ENCODE measurements at regions of chr1 and their contacts with region 1.

Region 1: GRCh38 chr1:28329395-28330153 is 734 bp downstream of the MED18 start:
- DNase-seq: peak; percentile 50
- ATAC-seq: peak; percentile 11
- H3K4me3 Mint-ChIP-seq: peak overlapping the region; percentile 92
- H3K27ac Mint-ChIP-seq: peak overlapping the region; percentile 97
- H3K4me1 Mint-ChIP-seq: peaks cover 49% of the 10 kb centered on the region
- H3K27me3 Mint-ChIP-seq: peaks cover 2% of the 10 kb centered on the region
- CTCF ChIP-seq: no peak

Region 2: DNA sequence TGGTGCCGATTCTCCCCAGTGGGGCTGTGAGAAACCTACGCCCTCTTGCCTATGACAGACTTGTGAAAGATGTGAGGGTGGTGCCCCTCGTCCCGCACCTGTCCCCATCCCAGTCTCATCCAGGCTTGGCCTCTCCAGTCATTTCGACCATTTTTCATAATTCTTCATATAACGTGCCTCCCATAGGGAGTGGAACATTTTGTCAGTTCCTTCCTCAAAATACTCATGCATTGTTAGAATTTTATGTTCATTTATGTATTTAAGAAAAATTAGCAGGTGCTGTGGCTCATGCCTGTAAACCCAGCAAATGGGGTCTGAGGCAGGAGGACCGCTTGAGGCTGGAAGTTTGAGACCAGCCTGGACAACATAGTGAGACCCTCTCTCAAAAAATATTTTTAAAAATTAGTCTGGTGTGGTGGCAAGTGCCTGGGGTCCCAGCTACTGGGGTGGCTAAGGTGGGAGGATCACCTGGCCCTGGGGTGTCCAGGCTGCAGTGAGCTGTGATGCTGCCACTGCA is 414.4 kb before region 1 on chr1:
- CTCF ChIA-PET with region 1: no interaction called
- POLR2A ChIA-PET with region 1: no interaction called
- intact Hi-C with region 1: no loop called
- DNase-seq: no peak
- ATAC-seq: no peak
- H3K4me3 Mint-ChIP-seq: peak overlapping the region; percentile 99
- H3K27ac Mint-ChIP-seq: peak overlapping the region; percentile 97
- H3K4me1 Mint-ChIP-seq: peaks cover 14% of the 10 kb centered on the region
- H3K27me3 Mint-ChIP-seq: peaks cover 3% of the 10 kb centered on the region
- CTCF ChIP-seq: no peak

Region 3: GRCh38 chr1:28088168-28088961 is 241.2 kb before region 1 on chr1 and contains the start of gene EYA3:
- CTCF ChIA-PET with region 1: no interaction called
- POLR2A ChIA-PET with region 1: interaction called, 13 read pairs
- intact Hi-C with region 1: loop called (anchors 1 kb)
- DNase-seq: peak; percentile 100
- ATAC-seq: peak; percentile 93
- H3K4me3 Mint-ChIP-seq: peak within 1 kb of the TSS; percentile 98
- H3K27ac Mint-ChIP-seq: peak within 1 kb of the TSS; percentile 98
- H3K4me1 Mint-ChIP-seq: peaks cover 39% of the 10 kb centered on the region
- H3K27me3 Mint-ChIP-seq: no peaks in the 10 kb centered on the region
- CTCF ChIP-seq: no peak
- total RNA-seq, gene EYA3: 26.7 and 31.0 TPM in 2 replicates

Region 4: DNA sequence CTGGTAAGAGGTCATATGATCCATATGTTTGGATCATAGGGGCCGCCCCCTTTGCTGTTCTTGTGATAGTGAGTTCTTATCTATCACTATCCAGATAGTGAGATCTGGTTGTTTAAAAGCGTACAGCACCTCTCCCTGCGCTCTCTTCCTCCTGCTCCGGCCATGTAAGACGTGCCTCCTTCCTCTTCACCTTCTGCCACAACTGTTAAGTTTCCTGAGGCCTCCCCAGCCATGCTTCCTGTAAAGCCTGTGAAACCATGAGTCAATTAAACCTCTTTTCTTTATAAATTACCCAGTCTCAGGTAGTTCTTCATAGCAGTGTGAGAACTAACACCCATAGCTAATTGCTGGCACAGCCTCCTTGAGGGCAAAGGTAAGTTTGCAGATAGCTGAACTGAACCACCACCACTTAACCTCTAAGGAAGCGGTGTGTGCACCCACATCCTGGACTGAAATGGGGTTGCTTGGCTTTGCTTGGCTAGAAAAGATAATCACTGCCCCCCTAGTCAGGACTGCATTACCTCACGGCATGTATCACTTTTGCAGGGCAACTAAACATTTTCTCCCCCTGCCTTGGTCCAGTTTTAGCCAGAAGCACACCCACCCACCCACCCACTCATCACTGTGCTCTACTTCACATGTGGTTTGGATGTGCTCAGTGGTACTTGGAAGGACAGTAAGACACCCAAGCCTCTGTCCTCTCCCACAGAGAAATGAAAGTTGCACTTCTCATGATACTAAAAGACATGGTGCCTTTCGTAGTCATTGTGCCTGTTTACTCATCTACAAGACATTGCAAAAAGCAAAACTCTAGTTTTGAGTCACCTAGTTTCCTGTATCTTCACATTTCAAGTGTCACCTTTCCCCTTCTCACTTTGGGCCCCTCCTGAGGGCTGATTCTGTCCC is 130.0 kb before region 1 on chr1:
- CTCF ChIA-PET with region 1: no interaction called
- POLR2A ChIA-PET with region 1: no interaction called
- intact Hi-C with region 1: no loop called
- DNase-seq: no peak
- ATAC-seq: peak; percentile 80
- H3K4me3 Mint-ChIP-seq: no peak overlapping the region
- H3K27ac Mint-ChIP-seq: peak overlapping the region; percentile 80
- H3K4me1 Mint-ChIP-seq: peaks cover 22% of the 10 kb centered on the region
- H3K27me3 Mint-ChIP-seq: no peaks in the 10 kb centered on the region
- CTCF ChIP-seq: no peak

Region 5: GRCh38 chr1:28259307-28260167 is 70.0 kb before region 1 on chr1 and contains the start of gene SESN2:
- CTCF ChIA-PET with region 1: no interaction called
- POLR2A ChIA-PET with region 1: interaction called, 79 read pairs
- intact Hi-C with region 1: loop called (anchors 1 kb)
- DNase-seq: peak; percentile 99
- ATAC-seq: peak; percentile 98
- H3K4me3 Mint-ChIP-seq: peak within 1 kb of the TSS; percentile 82
- H3K27ac Mint-ChIP-seq: peak within 1 kb of the TSS; percentile 79
- H3K4me1 Mint-ChIP-seq: peaks cover 23% of the 10 kb centered on the region
- H3K27me3 Mint-ChIP-seq: peaks cover 6% of the 10 kb centered on the region
- CTCF ChIP-seq: no peak
- total RNA-seq, gene SESN2: 19.5 and 19.8 TPM in 2 replicates

Region 6: GRCh38 chr1:28505406-28506187 is 176.0 kb after region 1 on chr1 and contains the start of gene RCC1:
- CTCF ChIA-PET with region 1: no interaction called
- POLR2A ChIA-PET with region 1: interaction called, 87 read pairs
- intact Hi-C with region 1: loop called (anchors 2 kb)
- DNase-seq: peak; percentile 82
- ATAC-seq: peak; percentile 87
- H3K4me3 Mint-ChIP-seq: peak within 1 kb of the TSS; percentile 98
- H3K27ac Mint-ChIP-seq: peak within 1 kb of the TSS; percentile 98
- H3K4me1 Mint-ChIP-seq: peaks cover 38% of the 10 kb centered on the region
- H3K27me3 Mint-ChIP-seq: no peaks in the 10 kb centered on the region
- CTCF ChIP-seq: no peak
- total RNA-seq, gene RCC1: 45.2 and 47.5 TPM in 2 replicates

Region 7: DNA sequence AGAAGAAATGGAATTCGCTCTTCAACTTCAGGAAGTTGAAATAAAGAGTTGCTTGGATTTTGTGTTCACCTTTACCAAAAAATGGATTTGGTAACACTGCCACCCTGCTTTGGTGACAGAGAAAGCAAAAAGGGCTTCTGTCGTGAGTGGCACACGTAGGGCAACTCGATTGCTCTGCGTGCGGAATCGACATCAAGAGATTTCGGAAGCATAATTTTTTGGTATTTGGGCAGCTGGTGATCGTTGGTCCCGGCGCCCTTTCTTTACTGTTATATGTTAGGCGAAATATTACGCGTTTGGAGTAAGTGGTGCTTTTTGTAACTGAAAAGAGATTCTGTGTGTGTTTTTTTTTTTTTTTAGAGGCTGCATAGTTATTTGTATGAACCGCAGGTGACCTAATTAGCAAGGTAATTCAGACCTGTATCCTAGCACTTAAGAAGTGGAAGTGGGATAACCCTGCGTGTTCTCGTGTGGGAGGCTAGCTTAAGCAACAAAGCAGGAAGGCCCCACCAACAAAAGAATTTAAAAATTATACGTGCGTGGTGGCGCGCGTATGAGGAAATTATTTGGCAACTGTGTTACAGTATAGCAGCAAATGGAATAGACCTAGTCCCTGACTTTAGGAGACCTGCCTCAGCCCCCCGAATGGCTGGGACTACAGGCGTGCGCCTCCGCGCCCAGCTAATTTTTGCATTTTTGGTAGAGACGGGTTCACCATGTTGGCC is 319.1 kb after region 1 on chr1 and contains the start of gene RNU11:
- CTCF ChIA-PET with region 1: no interaction called
- POLR2A ChIA-PET with region 1: interaction called, 40 read pairs
- intact Hi-C with region 1: loop called (anchors 1 kb)
- DNase-seq: peak; percentile 72
- ATAC-seq: peak; percentile 65
- H3K4me3 Mint-ChIP-seq: peak within 1 kb of the TSS; percentile 91
- H3K27ac Mint-ChIP-seq: peak within 1 kb of the TSS; percentile 100
- H3K4me1 Mint-ChIP-seq: peaks cover 35% of the 10 kb centered on the region
- H3K27me3 Mint-ChIP-seq: no peaks in the 10 kb centered on the region
- CTCF ChIP-seq: no peak
- total RNA-seq, gene RNU11: not detected in 2 replicates

Region 8: GRCh38 chr1:29181413-29182225 is 852.0 kb after region 1 on chr1 and contains the start of gene SRSF4:
- CTCF ChIA-PET with region 1: no interaction called
- POLR2A ChIA-PET with region 1: interaction called, 11 read pairs
- intact Hi-C with region 1: no loop called
- DNase-seq: peak; percentile 99
- ATAC-seq: peak; percentile 95
- H3K4me3 Mint-ChIP-seq: peak within 1 kb of the TSS; percentile 95
- H3K27ac Mint-ChIP-seq: peak within 1 kb of the TSS; percentile 92
- H3K4me1 Mint-ChIP-seq: peaks cover 45% of the 10 kb centered on the region
- H3K27me3 Mint-ChIP-seq: no peaks in the 10 kb centered on the region
- CTCF ChIP-seq: no peak
- total RNA-seq, gene SRSF4: 80.3 and 92.6 TPM in 2 replicates

Measured in activated B cell treated with CpG ODN at 0.5 μM for 24 hours (primary cell).